ENCODE measurements at regions of chr19 and their contacts with region 1.

Region 1: DNA sequence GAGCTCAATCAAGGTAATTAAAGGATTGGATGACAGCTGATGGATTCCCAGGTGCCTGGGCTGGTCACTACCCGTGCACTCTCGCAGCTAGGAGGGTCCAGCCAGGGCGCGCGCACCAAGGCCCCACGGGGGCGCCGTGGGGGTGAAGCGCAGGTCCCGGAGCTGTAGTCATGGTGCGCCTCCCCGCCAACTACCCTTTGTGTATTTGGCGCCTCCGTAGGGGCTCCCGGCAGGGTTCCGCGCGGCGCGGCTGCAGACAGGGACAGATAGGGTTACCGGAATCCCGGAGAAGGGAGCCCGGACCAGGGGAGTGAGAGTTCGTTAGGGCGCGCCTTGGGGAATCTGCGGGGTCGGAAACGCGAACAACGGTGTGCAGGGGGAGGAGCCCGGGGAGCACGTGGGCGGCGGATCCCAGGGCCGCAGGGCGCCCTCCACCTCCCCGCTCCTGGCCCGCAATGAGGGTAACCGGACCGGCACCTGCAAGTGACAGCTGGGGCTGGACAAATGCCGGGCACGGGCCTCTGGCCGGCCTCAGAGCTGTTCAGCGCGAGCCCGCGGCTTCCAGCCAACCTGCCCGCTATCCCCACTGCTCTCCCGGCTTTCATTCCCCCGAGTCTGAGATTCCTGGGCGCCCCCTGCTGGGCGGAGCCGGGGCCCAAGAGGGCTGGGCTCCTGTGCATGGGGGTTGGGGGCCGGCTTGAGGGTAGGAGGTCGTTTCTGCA is 3.4 kb upstream of the PRAM1 start:
- DNase-seq: peak; percentile 44 to 71 (median 60)
- H3K4me3 ChIP-seq: peak overlapping the region; percentile 52 to 57
- H3K4me3 Mint-ChIP-seq: peak overlapping the region; percentile 88 to 95 (median 91)
- H3K27ac ChIP-seq: peak overlapping the region; percentile 22
- H3K27ac Mint-ChIP-seq: peak overlapping the region; percentile 74 to 94 (median 87)
- H3K4me1 ChIP-seq: peaks cover 13% of the 10 kb centered on the region
- H3K4me1 Mint-ChIP-seq: peaks cover 4 to 33% (median 9%) of the 10 kb centered on the region in 4 donors
- H3K27me3 ChIP-seq: no peaks in the 10 kb centered on the region
- H3K27me3 Mint-ChIP-seq: no peaks in the 10 kb centered on the region

Region 2: GRCh38 chr19:8487137-8487851 is 18.5 kb before region 1 on chr19:
- CTCF ChIA-PET with region 1: interaction called, 18 read pairs
- POLR2A ChIA-PET with region 1: interaction called, 9 read pairs
- intact Hi-C with region 1: loop called (anchors 1 kb)
- DNase-seq: peak; percentile 66 to 76 (median 71)
- H3K4me3 ChIP-seq: no peak overlapping the region
- H3K4me3 Mint-ChIP-seq: peak overlapping the region; percentile 36 to 79 (median 66)
- H3K27ac ChIP-seq: peak overlapping the region; percentile 41
- H3K27ac Mint-ChIP-seq: peak overlapping the region; percentile 83 to 95 (median 89)
- H3K4me1 ChIP-seq: peaks cover 29% of the 10 kb centered on the region
- H3K4me1 Mint-ChIP-seq: peaks cover 24 to 50% (median 29%) of the 10 kb centered on the region in 4 donors
- H3K27me3 ChIP-seq: no peaks in the 10 kb centered on the region
- H3K27me3 Mint-ChIP-seq: no peaks in the 10 kb centered on the region

Region 3: GRCh38 chr19:8494158-8494557 is 11.7 kb before region 1 on chr19:
- CTCF ChIA-PET with region 1: interaction called, 6 read pairs
- POLR2A ChIA-PET with region 1: interaction called, 15 read pairs
- intact Hi-C with region 1: no loop called
- DNase-seq: no peak
- H3K4me3 ChIP-seq: no peak overlapping the region
- H3K4me3 Mint-ChIP-seq: no peak overlapping the region
- H3K27ac ChIP-seq: no peak overlapping the region
- H3K27ac Mint-ChIP-seq: peak overlapping the region; percentile 38 to 84 (median 64)
- H3K4me1 ChIP-seq: peaks cover 8% of the 10 kb centered on the region
- H3K4me1 Mint-ChIP-seq: peaks cover 4 to 17% (median 4%) of the 10 kb centered on the region in 4 donors
- H3K27me3 ChIP-seq: no peaks in the 10 kb centered on the region
- H3K27me3 Mint-ChIP-seq: no peaks in the 10 kb centered on the region